ENCODE measurements at regions of chr14 and their contacts with region 1.

Region 1: GRCh38 chr14:105617201-105617777 is 90.9 kb downstream of the TMEM121 start:
- DNase-seq: peak in 1 of 2 donors; percentile 64
- H3K4me3 ChIP-seq: no peak overlapping the region
- H3K27ac ChIP-seq: no peak overlapping the region
- H3K4me1 ChIP-seq: peaks cover 0 to 13% (median 6%) of the 10 kb centered on the region in 4 donors
- H3K27me3 ChIP-seq: no peaks in the 10 kb centered on the region
- CTCF ChIP-seq: no peak

Region 2: GRCh38 chr14:105503935-105504692 is 113.2 kb before region 1 on chr14:
- intact Hi-C with region 1: no loop called
- DNase-seq: peak in 1 of 2 donors; percentile 59
- H3K4me3 ChIP-seq: no peak overlapping the region
- H3K27ac ChIP-seq: no peak overlapping the region
- H3K4me1 ChIP-seq: no peaks in the 10 kb centered on the region
- H3K27me3 ChIP-seq: no peaks in the 10 kb centered on the region
- CTCF ChIP-seq: no peak

Region 3: GRCh38 chr14:105760691-105761346 is 143.5 kb after region 1 on chr14:
- intact Hi-C with region 1: loop called (anchors 2 kb)
- DNase-seq: peak in 1 of 2 donors; percentile 56
- H3K4me3 ChIP-seq: no peak overlapping the region
- H3K27ac ChIP-seq: no peak overlapping the region
- H3K4me1 ChIP-seq: peaks cover 0 to 6% (median 2%) of the 10 kb centered on the region in 4 donors
- H3K27me3 ChIP-seq: no peaks in the 10 kb centered on the region
- CTCF ChIP-seq: no peak